Body of pancreas (tissue), 4 donors: ENCODE measurements at regions of chr1 and their contacts with region 1.

Region 1: GRCh38 chr1:31663622-31664452 is 19.2 kb upstream of the PEF1 start:
- DNase-seq: peak; percentile 51 to 72 (median 61)
- ATAC-seq: peak; percentile 54
- H3K4me3 ChIP-seq: no peak overlapping the region
- H3K27ac ChIP-seq: no peak overlapping the region
- H3K4me1 ChIP-seq: no peaks in the 10 kb centered on the region
- H3K27me3 ChIP-seq: no peaks in the 10 kb centered on the region
- CTCF ChIP-seq: peak; percentile 87 to 96 (median 94)
- POLR2A ChIP-seq: no peak

Region 2: DNA sequence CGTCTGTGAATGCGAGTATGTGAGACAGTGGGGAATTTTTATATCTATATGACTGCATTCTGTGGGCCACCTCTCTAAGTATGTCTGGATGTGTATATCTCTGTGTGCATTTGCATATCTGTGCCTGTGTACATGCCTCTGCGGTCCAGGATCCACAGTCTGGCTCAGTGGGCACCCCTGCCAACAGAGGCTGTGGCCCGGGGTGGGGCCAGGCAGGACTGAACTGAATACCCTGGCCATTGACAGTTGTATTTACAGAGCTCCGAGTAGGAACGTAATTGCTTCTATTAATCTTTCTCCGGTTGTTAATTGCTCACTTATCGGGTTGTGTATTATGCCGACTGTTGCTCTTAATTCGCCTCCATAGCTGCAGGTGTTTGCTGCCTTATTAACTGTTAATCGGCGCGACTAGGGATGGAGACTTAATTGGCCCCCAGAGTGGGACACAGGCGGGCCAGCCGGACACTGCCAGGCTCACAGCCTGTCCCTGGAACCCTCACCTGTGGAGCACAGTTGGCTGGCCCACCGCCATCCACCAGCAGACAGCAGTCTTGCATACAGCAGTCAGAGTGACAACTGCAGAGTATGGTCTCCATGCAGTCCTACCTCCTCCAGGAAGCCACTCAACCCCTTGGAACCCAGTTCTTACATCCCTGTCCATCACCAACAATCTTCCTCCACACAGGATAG is 122.7 kb after region 1 on chr1:
- intact Hi-C with region 1: loop called (anchors 2 kb)
- DNase-seq: peak in 1 of 4 donors; percentile 11
- ATAC-seq: no peak
- H3K4me3 ChIP-seq: no peak overlapping the region
- H3K27ac ChIP-seq: no peak overlapping the region
- H3K4me1 ChIP-seq: peaks cover 14% of the 10 kb centered on the region
- H3K27me3 ChIP-seq: no peaks in the 10 kb centered on the region
- CTCF ChIP-seq: no peak
- POLR2A ChIP-seq: no peak

Region 3: DNA sequence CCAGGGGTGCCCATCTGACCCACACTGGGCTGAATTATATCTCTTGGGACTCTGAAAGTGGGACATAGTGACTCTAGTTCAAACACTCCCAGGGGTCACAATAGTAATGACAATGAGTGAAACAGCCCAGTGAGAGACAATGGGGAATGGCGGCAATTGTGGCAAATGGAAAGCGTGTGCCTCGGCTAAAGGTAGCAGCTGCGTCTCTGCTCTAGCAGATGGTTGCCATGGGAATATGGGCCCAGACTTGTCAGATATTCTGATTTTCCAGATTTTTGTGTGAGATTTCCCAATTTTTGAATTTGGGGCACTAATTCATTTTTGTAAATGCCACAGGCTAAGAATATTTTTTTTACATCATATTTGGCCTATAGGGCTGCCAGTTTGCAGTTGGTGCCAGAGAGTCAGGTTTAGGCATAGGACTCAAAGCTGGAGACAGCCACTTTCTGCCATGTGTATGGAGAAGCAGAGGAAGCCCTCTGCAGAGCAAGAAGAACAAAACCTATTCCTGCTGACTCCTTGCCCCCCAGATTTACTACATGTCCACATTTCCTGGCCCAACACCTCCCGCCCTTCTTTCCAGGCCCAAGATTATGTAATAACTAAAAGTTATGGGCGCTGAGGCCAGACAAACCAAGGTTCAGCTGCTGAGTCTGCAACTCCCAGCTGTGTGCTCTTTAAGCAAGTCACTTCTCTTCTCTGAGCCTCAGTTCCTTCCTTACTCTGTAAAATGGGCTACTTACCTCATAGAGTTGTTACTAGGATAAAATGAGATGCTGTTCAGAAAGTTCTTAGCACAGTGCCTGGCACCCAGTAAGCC is 295.9 kb after region 1 on chr1:
- intact Hi-C with region 1: loop called (anchors 10 kb)
- DNase-seq: no peak
- ATAC-seq: no peak
- H3K4me3 ChIP-seq: no peak overlapping the region
- H3K27ac ChIP-seq: no peak overlapping the region
- H3K4me1 ChIP-seq: peaks cover 18% of the 10 kb centered on the region
- H3K27me3 ChIP-seq: no peaks in the 10 kb centered on the region
- CTCF ChIP-seq: no peak
- POLR2A ChIP-seq: no peak